Endothelial cell of umbilical vein (primary cell): ENCODE measurements at regions of chr12 and their contacts with region 1.

Region 1: GRCh38 chr12:51172515-51173431 is at the start of gene TFCP2:
- DNase-seq: peak; percentile 97
- H3K4me3 ChIP-seq: peak within 1 kb of the TSS; percentile 61 to 93 (median 80)
- H3K27ac ChIP-seq: peak within 1 kb of the TSS; percentile 67
- H3K4me1 ChIP-seq: peaks cover 10% of the 10 kb centered on the region
- H3K27me3 ChIP-seq: no peaks in the 10 kb centered on the region
- CTCF ChIP-seq: no peak
- POLR2A ChIP-seq: peak; percentile 36
- total RNA-seq, gene TFCP2: 24.9 and 28.6 TPM in 2 replicates

Region 2: GRCh38 chr12:51238510-51239334 is 65.9 kb after region 1 on chr12 and contains the start of gene DAZAP2:
- CTCF ChIA-PET with region 1: no interaction called
- POLR2A ChIA-PET with region 1: interaction called, 3 read pairs
- dilution Hi-C with region 1: no loop called
- intact Hi-C with region 1: loop called (anchors 1 kb)
- DNase-seq: peak; percentile 96
- H3K4me3 ChIP-seq: peak within 1 kb of the TSS; percentile 11 to 97 (median 66)
- H3K27ac ChIP-seq: peak within 1 kb of the TSS; percentile 85
- H3K4me1 ChIP-seq: peaks cover 12% of the 10 kb centered on the region
- H3K27me3 ChIP-seq: no peaks in the 10 kb centered on the region
- CTCF ChIP-seq: peak in 1 of 2 donors; percentile 31
- POLR2A ChIP-seq: peak; percentile 93
- total RNA-seq, gene DAZAP2: 177 TPM in 2 replicates

Region 3: DNA sequence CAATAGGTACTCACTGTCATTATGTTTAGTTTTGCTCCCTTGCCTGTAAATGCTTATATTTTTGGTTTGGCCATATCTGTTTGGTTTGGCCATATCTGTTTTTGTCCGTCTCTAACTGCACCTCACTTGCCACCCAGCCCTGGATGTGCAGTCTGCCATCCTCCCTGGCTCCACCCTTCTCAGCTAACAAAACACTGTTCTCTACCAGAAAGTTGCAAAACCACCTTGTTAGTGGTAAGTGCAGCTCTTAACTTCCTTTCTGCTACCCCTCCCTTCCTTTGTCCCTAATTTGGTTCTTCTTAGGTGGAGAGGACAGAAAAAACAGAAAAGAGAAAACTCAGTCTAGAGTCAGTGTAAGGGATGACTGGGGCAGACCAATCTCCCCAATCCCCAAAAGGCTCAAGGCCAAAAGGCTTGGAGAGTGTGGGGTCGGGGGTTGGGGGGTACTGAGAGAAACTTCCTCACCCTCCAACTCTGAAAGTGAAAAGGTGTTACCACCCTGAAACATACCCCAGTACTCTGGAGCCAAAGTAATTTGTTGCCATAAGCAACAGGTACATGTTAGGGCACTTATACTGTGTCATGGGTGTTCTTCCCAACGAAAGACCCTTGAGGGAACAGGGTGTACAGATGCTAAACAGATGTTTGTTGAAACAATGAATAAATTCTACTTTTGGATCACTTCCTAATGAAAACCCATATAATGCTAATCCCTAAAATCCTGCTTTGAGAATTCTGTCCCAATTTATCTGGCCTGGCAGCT is 146.2 kb after region 1 on chr12:
- CTCF ChIA-PET with region 1: no interaction called
- POLR2A ChIA-PET with region 1: no interaction called
- dilution Hi-C with region 1: no loop called
- intact Hi-C with region 1: no loop called
- DNase-seq: no peak
- H3K4me3 ChIP-seq: no peak overlapping the region
- H3K27ac ChIP-seq: no peak overlapping the region
- H3K4me1 ChIP-seq: no peaks in the 10 kb centered on the region
- H3K27me3 ChIP-seq: peaks cover 0 to 2% of the 10 kb centered on the region in 2 experiments
- CTCF ChIP-seq: no peak
- POLR2A ChIP-seq: no peak